HepG2 (cell line): ENCODE measurements at regions of chr22 and their contacts with region 1.

Region 1: GRCh38 chr22:40867109-40867508 is 5.2 kb upstream of the DNAJB7 start:
- DNase-seq: no peak
- ATAC-seq: peak; percentile 58
- H3K4me3 ChIP-seq: no peak overlapping the region
- H3K27ac ChIP-seq: peak overlapping the region; percentile 48
- H3K4me1 ChIP-seq: peaks cover 34% of the 10 kb centered on the region
- H3K27me3 ChIP-seq: no peaks in the 10 kb centered on the region
- CTCF ChIP-seq: no peak
- EP300 ChIP-seq: no peak
- POLR2A ChIP-seq: no peak
- RAD21 ChIP-seq: no peak

Region 2: DNA sequence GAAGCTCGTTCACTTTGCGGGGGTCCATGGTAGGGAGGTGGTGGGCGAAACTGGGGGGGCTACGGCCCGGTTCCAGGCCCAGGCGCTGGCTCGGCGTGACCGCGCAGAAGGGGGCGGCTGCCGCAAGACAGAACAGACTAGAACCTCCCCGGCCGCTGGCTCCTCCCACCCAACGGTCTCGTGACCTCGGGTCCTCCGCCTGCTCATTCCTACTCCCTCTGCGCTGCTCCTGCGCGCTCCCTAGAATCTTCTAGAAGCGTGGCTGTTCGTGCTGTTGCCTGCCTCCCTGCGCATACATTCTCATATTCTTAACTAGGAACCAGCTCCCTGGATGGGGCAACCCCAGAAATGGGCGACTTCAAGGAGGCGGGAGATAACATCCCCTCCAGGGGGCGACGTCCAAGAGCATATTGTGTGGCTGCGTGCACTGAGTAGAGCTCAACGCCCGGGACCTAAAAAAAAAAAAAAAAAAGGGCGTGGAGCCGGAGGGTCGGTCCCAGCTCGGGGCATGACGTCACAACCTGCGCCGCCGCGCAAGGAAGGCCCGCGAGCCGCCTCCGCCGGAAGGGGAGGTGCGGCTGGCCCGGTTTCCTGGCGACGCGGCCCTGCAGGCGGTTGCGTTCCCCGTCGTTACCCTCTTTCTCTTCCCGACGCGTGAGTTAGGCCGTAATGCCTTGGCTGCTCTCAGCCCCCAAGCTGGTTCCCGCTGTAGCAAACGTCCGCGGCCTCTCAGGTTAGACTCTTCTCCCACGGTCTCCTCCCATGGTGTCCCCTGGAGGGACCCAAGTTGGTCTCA is 10.4 kb before region 1 on chr22 and contains the starts of genes ST13 and XPNPEP3:
- CTCF ChIA-PET with region 1: no interaction called
- POLR2A ChIA-PET with region 1: interaction called, 18 read pairs
- in situ Hi-C with region 1: no loop called
- intact Hi-C with region 1: no loop called
- DNase-seq: peak; percentile 92
- ATAC-seq: peak; percentile 94
- H3K4me3 ChIP-seq: peak within 1 kb of the TSS; percentile 85 to 96 (median 90)
- H3K27ac ChIP-seq: peak within 1 kb of the TSS; percentile 96
- H3K4me1 ChIP-seq: peaks cover 39% of the 10 kb centered on the region
- H3K27me3 ChIP-seq: no peaks in the 10 kb centered on the region; a peak in 1 of 5 replicates
- CTCF ChIP-seq: peak; percentile 50; the same call in 1 of the 2 replicates
- EP300 ChIP-seq: peak in 1 of 2 experiments; percentile 77; a peak in 3 of 4 replicates
- POLR2A ChIP-seq: peak; percentile 75 to 83
- RAD21 ChIP-seq: no peak
- total RNA-seq, gene ST13: 274 and 393 TPM in 2 replicates
- total RNA-seq, gene XPNPEP3: 10.3 and 15.9 TPM in 2 replicates

Region 3: DNA sequence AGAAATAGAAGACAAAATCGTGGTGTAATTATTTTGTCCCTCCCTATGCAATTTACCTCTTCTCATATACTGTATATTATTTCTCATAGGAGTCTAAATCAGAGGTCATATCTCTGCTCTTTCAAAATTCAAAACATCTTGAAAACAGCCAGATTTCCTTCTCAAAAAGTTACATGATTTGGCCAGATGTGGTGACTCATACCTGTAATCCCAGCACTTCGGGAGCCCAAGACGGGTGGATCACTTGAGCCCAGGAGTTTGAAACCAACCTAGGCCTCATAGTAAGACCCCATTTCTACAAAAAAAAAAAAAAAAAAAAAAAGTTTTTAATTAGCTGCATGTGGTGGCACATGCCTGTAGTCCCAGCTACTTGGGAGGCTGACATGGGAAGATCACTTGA is 23.8 kb after region 1 on chr22:
- CTCF ChIA-PET with region 1: no interaction called
- POLR2A ChIA-PET with region 1: no interaction called
- in situ Hi-C with region 1: no loop called
- intact Hi-C with region 1: no loop called
- DNase-seq: no peak
- ATAC-seq: no peak
- H3K4me3 ChIP-seq: no peak overlapping the region
- H3K27ac ChIP-seq: no peak overlapping the region
- H3K4me1 ChIP-seq: no peaks in the 10 kb centered on the region
- H3K27me3 ChIP-seq: no peaks in the 10 kb centered on the region
- CTCF ChIP-seq: no peak
- EP300 ChIP-seq: no peak
- POLR2A ChIP-seq: no peak
- RAD21 ChIP-seq: no peak